ENCODE measurements at regions of chr11 and their contacts with region 1.

Region 1: GRCh38 chr11:7442588-7443215 is 42.6 kb upstream of the OLFML1 start:
- DNase-seq: peak; percentile 74
- CTCF ChIP-seq: peak; percentile 89

Region 2: DNA sequence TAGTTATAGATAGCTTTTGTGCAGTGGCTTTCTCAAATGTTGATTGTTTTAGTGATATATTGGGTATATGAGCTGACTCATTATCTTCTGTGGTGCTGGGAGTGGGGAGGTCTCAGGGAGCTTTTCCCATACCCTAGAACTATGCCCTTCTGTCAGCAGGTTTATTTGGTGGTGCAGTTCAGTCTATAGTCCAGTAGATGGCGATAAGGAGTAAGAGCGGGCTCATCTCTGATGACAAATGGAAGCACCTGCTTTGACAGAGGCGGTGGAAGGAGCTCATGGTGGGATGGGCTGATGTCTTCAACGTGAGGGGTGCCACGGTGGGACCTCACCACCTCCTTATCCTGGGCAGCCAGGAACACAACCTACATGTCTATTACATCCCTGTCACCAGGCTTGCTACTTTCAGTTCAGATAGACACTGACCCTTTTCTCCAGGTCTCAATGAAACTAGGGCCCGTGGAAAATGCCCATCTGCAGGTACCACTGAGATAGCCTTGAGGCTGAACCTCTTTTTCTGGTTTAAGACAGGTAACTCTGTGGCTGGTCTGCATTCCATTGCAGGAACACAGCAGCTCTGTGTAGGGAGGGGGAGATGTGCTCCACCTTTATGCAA is 630.2 kb before region 1 on chr11:
- CTCF ChIA-PET with region 1: interaction called, 15 read pairs
- POLR2A ChIA-PET with region 1: no interaction called
- DNase-seq: peak; percentile 73
- CTCF ChIP-seq: peak; percentile 84

Region 3: GRCh38 chr11:7143908-7144307 is 298.8 kb before region 1 on chr11:
- CTCF ChIA-PET with region 1: interaction called, 12 read pairs
- POLR2A ChIA-PET with region 1: no interaction called
- DNase-seq: no peak
- CTCF ChIP-seq: peak; percentile 23

Region 4: DNA sequence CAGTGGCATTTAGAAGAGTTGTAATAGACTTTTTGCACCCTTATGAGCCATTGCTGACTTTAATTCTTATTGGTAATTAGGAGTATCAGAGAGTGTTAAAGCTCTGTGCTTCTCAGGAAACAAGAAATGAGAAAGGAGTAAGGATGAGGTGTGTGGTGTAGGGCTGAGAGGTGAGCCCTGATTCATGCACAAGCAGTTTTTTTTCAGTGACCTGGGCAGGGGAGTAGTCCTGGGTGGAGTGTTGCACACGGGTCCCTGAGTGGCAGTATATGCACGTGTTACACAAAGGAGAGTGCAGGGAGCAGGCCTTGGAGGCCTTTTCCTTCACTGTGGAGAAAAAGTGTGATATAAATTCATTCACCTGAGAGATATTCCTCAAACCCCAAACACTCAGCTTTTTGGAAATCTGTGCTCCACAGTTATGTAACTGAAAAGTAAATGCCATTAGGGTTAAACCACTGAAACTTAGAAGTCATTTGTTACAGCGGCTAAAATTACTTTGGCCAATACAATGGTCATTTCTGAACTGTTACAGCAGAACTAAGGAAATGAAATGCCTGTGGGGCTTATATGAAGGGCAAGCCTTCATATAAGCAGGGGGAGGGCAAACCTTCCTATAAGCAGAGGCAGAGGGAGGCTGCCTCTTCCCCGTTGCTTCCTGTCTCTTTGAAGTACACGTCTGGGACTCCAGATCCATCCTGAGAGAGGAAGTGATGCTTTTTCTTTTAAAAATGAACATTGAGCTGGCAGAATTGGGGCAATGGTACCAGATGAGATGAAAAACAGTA is 20.0 kb before region 1 on chr11:
- CTCF ChIA-PET with region 1: interaction called, 50 read pairs
- POLR2A ChIA-PET with region 1: no interaction called
- DNase-seq: no peak
- CTCF ChIP-seq: no peak

Region 5: DNA sequence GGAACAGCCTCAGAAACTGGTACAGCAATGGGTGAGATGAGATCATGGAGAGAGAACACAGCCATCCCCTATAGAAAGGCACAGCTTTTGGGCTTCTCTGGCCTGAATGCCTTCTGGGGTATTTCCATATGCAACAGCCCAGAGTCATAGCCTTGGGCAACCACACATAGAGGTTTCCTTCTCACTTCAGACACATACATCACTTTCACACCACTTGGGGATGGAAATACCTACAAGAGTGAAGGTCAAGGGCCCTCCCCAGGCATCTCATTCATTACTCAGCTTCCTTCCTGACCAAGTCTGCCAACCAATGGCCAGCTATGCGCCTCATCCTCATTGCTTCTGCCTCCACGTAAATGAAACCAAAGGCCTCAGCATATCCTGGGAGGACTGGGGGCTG is 24.9 kb after region 1 on chr11:
- CTCF ChIA-PET with region 1: interaction called, 60 read pairs
- POLR2A ChIA-PET with region 1: no interaction called
- DNase-seq: peak; percentile 27
- CTCF ChIP-seq: no peak

Region 6: DNA sequence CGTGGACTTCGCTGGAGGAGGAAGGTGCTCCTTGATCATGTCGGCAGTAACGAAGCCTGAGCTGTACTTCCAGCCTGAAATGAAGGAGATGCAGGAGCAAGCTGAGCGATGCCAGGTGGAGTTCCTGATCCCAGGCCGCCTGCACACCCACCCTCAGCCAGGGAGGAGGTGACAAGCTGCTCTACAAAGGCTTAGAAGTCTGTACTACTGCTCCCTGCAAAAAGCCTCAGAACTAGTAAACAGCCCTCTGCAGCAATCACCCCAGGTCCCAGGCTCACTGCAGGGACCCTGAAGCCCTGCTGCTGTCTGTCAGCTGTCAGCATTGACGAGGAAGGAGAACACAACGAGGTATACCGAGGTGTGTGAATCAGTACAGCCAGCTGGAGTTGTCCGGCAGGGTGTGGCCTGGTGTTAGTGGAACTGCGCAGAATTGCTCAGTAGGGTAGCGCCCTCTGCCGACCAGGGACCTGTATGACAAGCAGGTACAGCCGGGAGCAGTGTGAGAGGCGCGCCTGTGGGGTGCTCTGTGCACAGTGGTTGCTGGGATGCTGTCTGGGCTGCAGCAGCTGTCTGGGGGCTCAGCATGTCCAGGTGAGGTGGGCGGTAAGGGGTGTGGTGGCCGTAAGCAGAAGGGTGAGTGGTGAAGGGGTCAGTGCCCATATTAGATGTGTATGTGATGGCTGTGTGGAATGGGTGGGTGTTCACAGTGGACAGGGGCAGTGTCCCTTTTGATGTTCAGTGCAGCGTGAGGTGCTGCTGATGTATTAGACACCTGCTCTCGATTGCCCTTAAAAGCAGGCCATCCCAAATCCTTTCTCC is 223.0 kb after region 1 on chr11:
- CTCF ChIA-PET with region 1: interaction called, 13 read pairs
- POLR2A ChIA-PET with region 1: no interaction called
- DNase-seq: peak; percentile 92
- CTCF ChIP-seq: peak; percentile 91